GM18951 (cell line): ENCODE measurements at regions of chr12 and their contacts with region 1.

Region 1: DNA sequence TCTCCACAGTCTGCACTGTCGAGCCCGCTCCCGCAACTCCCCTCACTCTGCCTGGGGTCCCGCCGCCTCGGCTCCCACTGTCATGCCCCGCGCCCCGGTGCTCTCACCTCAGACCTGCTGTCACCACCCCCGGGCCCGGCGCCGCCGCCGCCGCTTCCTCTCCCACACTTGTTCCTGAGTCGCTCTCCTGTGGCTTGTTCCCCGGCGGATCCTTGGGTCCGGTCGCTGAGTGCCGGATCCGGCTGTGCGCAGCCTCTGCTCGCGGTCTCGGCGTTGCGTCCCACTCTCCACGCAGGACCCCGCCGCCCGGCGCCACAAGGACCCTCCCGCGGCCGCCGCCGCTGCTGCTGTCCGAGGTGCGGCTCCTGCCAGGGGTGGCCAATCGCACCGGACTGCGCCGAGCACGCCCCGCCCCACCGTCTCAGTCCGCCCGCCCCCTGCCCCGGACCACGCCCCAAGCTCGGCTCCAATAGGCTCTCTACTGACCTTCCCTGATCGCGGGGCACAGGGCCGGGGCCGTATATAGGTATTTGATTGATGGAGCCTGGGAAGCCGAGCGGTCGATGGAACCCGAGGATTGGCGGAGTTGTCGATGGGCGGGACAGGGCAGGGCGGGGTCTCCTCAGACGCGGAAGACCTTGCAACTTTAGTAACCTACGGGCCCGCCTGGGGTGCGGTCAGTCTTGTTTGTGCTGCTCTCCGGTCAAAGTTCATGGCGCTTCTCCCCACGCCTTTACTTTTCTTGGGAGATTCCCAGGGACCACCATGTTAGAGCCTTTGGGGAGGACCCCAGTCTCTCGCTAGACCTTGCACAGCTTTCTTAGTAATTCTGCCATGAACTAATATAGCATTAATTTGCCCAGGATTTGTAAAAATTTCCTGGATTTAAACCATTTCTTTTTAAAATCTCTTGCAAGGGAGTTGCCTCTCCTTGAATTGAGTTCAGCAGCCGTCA is at the start of gene TAOK3:
- POLR2A ChIP-seq: peak; percentile 94

Region 2: DNA sequence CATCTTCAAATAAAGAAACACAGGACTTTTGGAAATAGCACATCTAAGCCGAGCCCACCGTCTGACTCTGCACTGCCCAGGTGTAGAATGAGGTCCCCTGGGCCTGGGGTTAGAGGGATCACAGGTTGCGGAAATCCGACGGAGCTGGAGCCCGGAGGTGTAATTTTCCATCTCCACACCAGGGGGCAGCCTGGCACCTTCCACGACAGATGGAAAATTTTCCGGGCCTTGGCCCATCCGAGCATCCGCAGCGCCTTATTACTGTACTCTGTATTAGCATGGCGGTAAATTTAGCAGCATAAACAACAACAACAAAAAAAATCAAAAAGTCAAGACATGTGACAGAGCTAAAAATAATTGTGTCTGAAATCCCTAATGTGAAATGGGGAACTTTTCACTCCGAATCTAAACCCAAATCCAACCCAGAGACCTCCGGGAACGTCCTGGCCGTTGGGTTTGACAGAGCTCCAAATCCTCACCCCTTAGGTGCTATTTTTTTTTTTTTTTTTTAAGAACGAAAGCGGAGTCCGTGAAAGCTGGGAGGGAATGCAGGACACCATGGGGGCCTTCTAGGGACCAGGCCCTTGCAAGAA is 497.9 kb before region 1 on chr12:
- in situ Hi-C with region 1: loop called (anchors 25 kb)
- POLR2A ChIP-seq: no peak